ENCODE measurements at regions of chr1 and their contacts with region 1.

Region 1: GRCh38 chr1:71509051-71509595 is 428.3 kb upstream of the ZRANB2 start:
- DNase-seq: no peak
- ATAC-seq: no peak

Region 2: DNA sequence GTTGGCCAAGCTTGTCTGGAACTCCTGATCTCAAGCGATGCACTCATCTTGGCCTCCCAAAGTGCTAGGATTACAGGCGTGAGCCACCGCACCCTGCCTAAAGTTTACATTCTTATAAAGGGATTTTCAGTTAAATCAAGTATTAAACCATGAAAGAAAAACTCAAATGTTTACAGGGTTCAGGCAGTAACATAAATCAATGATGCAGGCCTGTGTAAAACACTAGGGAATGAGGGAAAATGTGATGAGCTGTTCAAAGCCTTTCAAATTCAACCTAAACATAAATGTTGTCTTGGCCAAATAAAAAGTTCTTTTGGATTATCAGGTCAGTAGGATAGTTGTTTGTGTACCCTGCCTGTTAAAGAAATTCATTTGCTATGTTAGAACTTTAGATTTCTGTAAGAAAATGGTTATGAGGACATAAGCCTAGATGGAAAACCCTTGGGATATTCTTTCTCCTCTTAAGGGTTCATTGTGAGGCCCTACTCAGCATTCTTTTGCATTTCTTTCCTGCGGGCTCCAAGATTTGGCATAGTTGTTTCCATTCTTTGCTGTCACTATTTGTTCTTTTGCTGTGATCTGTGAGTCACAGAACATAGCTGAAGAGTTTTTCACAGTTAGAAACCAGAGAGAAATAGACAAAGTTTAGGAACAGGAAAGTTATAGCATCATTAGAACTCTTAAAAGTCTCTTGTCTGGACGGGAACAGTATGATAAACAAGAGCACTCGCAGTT is 419.4 kb before region 1 on chr1:
- intact Hi-C with region 1: loop called in 1 of 2 experiments (anchors 5 kb)
- DNase-seq: no peak
- ATAC-seq: no peak

Measured in left cardiac atrium (tissue), 4 donors.